A673 (cell line): ENCODE measurements at regions of chr7 and their contacts with region 1.

Region 1: DNA sequence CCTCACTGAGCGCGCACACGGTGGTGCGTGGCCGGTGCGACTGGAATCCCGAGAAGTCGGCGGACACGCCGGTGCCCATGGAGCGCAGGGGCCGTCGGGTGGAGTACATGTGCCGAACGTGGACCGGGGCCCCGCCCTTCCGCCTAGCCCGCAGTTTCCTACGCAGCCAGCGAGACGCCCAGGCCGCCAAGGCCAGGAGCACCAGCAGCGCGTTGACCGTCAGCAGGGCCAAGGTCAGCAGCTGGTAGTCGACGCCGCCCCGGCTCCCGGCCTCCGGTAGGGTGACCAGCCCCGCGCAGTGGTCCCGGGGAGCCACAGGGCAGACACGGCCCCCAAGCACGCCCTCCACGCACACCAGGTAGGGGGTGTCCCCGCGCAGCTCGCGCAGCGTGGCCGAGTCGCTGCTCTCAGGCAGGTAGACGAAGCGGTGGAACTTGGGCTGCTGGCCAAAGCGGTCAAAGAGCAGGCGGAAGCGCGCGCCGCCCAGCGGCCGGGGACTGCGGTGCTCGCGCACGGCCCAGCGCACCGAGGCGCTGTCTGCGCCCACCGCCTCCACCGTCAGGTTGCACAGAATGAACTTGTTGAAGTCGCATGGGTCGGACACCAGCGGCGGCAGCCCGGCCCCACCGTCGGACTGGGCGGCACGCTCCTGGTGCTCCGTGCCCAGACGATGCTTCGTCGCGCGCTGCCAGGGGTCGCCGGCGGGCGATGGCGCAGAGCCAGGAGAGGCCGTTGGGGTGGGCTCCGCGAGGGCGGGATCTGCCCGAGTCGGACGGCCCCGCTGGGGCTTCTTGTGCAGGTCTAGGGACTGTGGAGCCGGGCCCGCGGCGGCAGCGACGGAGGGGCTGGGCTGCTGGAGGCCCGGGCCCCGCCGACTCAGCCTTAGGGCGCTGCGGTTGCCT is 2.2 kb downstream of the TRIL start:
- DNase-seq: peak; percentile 78
- H3K4me3 ChIP-seq: peak overlapping the region; percentile 71
- H3K27ac ChIP-seq: no peak overlapping the region
- H3K4me1 ChIP-seq: peaks cover 50% of the 10 kb centered on the region
- H3K27me3 ChIP-seq: peaks cover 5% of the 10 kb centered on the region
- CTCF ChIP-seq: peak; percentile 71

Region 2: DNA sequence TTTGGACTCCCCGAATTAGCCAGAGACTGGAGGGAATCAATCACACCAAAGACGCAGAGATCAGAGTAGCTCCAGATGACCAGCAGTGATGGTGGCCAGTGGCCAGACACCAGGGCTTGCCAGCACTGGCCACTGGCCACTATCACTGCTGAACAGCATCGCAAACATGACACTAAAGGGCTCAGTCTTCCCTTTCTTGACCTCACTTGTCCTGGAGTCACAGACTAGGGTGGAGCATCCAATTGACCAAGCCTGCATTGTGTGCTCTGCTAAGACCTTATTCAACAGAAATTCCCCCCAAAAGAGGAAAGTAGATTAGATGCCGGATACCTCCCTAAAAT is 308.9 kb before region 1 on chr7:
- CTCF ChIA-PET with region 1: no interaction called
- POLR2A ChIA-PET with region 1: no interaction called
- intact Hi-C with region 1: no loop called
- DNase-seq: no peak
- H3K4me3 ChIP-seq: no peak overlapping the region
- H3K27ac ChIP-seq: no peak overlapping the region
- H3K4me1 ChIP-seq: no peaks in the 10 kb centered on the region
- H3K27me3 ChIP-seq: peaks cover under 1% of the 10 kb centered on the region
- CTCF ChIP-seq: no peak

Region 3: GRCh38 chr7:29408841-29409243 is 452.9 kb after region 1 on chr7:
- CTCF ChIA-PET with region 1: interaction called, 7 read pairs
- POLR2A ChIA-PET with region 1: no interaction called
- intact Hi-C with region 1: loop called (anchors 1 kb)
- DNase-seq: peak; percentile 95
- H3K4me3 ChIP-seq: no peak overlapping the region
- H3K27ac ChIP-seq: peak overlapping the region; percentile 60
- H3K4me1 ChIP-seq: peaks cover 35% of the 10 kb centered on the region
- H3K27me3 ChIP-seq: no peaks in the 10 kb centered on the region
- CTCF ChIP-seq: peak; percentile 84